ENCODE measurements at regions of chr17 and their contacts with region 1.

Region 1: GRCh38 chr17:75182569-75183450 is at the start of gene SUMO2:
- DNase-seq: peak; percentile 92 to 99 (median 96)
- ATAC-seq: peak; percentile 93 to 96 (median 94)
- H3K4me3 ChIP-seq: peak within 1 kb of the TSS; percentile 87 to 97 (median 92)
- H3K27ac ChIP-seq: peak within 1 kb of the TSS; percentile 95 to 99 (median 98)
- H3K4me1 ChIP-seq: peaks cover 0 to 13% (median 4%) of the 10 kb centered on the region in 3 donors
- H3K27me3 ChIP-seq: no peaks in the 10 kb centered on the region
- CTCF ChIP-seq: peak; percentile 12 to 37 (median 23)
- total RNA-seq, gene SUMO2: 102 to 178 (median 141) TPM

Region 2: DNA sequence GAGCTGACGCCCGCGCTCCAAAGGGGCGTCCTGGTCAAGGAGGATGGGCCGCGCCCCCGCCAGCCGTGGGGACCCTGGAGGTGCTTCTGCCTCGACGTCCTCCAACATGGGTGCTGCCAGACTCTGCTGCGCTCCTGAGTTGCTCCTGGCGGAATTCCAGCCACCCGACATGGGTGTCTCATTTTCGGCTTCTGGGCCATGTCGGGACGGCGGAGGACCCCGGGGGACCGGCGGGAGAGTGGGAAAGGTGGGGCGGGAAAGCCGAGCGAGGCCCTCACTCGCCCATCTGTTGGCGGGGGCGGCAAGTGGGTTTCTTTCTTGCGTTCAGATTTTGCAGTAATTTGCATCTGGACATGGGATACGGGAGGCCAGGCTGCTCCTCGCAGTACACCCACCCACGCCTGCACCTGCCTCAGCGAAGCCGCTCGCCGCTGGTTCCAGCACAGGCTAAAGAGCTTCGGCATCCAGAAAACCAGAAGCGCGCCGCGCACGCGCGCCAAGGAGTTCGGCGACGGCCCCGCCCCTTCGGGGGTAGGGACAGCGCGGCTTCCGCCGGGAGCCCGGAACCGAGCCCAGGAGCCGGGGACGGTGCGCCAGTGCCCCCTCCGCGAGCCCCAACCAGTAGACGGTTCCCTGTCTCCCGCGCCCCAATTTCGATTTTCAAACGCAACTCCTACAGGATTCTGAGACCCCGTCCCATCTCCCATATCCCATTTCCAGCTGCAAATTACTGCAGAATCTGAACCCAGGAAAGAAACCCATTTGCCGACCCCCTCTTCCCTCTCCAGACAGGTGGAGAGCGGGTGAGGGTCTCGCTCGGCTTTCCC is 73.2 kb before region 1 on chr17 and contains the start of gene ARMC7:
- intact Hi-C with region 1: loop called in 1 of 3 experiments (anchors 10 kb)
- DNase-seq: peak; percentile 88 to 98 (median 92)
- ATAC-seq: peak; percentile 79 to 91 (median 89)
- H3K4me3 ChIP-seq: peak within 1 kb of the TSS; percentile 55 to 82 (median 62)
- H3K27ac ChIP-seq: peak within 1 kb of the TSS; percentile 5 to 58 (median 26)
- H3K4me1 ChIP-seq: peaks cover 0 to 6% (median 5%) of the 10 kb centered on the region in 3 donors
- H3K27me3 ChIP-seq: no peaks in the 10 kb centered on the region
- CTCF ChIP-seq: no peak
- total RNA-seq, gene ARMC7: 2.3 to 7.4 (median 3.4) TPM

Measured in pancreas (tissue), 10 donors.